Cardiac septum (tissue), 1 donor: ENCODE measurements at regions of chrX and their contacts with region 1.

Region 1: DNA sequence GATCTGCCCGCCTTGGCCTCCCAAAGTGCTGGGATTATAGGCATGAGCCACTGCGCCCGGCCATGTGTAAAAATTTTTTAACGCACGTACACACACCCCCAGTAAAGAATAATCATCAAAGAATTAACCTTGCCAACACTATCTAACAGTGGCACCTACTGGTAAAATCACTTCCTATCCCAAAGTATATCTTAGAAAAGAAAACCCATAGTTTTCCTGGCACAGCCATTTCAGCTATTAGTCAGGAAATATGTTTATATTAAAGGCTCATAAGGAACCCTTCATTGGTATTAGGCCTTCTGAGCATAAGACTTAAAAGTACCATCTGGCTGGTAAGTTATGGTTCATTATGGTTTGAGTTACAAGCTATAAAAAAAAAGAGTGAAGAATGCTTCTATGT is 14.1 kb downstream of the S100G start:
- DNase-seq: no peak

Region 2: DNA sequence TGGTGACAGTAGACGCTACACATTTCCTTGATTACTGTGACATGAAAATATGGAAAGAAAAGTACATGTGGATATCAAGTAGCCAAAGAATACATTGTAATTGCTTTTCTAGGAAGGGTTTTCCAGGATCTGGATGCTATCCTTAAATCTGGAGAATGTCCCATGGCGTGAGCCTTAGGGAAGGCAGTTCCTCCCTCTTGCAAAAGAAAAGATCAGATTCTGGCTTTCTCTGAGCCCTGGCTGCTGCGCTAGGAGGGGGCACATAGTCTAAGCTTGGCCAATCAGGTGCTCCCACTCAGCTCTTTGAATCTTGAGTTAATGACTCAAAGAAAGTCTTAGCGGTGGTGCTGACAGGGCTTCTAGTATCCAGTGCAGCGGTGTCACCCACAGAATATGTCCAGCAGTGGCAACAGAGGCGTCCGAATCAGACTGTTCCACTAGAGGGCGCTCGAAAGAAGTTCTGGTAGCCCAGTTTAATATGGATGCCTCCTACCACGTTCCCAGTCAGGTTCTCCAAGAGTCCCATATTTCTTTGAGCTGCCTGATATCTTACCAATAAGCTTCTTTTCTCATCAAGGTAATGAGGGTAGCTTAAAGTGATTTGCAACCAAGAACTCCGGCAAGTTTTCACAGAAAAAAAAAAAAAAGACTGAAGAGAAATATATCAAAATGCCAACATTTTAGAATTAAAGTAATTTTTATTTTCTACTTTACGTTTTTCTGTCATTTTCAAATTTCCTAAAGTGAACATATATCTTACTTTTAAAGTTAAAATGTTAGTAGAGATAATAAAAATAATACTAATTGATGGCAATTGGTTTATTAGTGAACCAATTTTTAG is 227.5 kb before region 1 on chrX:
- intact Hi-C with region 1: loop called (anchors 5 kb)
- DNase-seq: peak; percentile 77

Region 3: DNA sequence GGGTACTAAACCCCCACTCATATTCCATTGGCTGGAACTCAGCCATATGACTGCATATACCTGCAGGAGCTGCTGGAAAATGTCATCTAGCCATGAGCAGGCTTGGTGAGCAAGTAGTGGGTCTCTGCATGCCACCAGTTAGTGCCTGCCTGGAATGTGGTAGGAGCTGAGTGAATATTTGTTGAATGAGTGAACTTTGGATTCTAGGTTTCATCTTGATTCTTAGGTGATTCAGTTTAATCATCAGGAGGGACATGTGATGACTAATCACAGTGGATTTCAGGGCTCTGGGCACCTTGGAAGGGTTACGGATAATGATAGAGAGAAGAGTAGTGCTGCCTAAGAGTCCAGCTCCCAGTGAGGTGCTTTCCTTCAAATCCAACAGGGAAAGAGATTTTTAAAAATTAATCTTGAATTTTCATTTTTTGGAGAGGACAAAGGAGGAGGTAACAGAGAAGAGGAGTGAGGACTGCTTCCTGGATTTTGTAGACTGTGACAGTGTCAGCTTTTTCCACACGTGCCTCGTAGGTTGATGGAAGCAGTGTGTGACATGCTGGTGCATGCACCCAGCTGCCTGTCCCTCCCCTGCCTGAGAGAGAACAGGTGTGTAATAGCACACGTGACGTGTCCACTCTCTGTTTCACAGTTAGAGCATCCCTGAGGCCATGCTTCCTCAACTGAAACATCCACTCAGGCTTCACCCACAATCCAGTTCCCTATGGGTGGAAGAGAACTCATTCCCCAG is 741.3 kb after region 1 on chrX:
- intact Hi-C with region 1: no loop called
- DNase-seq: no peak